Activated naive CD4-positive, alpha-beta T cell treated with anti-CD3 and anti-CD28 coated beads for 36 hours (primary cell): ENCODE measurements at regions of chr13 and their contacts with region 1.

Region 1: GRCh38 chr13:44293908-44294735 is 79.5 kb upstream of the SERP2 start:
- DNase-seq: peak; percentile 27
- H3K4me3 Mint-ChIP-seq: no peak overlapping the region
- H3K27ac Mint-ChIP-seq: peak overlapping the region; percentile 59
- H3K4me1 Mint-ChIP-seq: peaks cover 27% of the 10 kb centered on the region
- H3K27me3 Mint-ChIP-seq: peaks cover 18% of the 10 kb centered on the region

Region 2: GRCh38 chr13:44274452-44275205 is 19.5 kb before region 1 on chr13:
- CTCF ChIA-PET with region 1: no interaction called
- intact Hi-C with region 1: loop called (anchors 1 kb)
- DNase-seq: peak; percentile 27
- H3K4me3 Mint-ChIP-seq: peak overlapping the region; percentile 70
- H3K27ac Mint-ChIP-seq: peak overlapping the region; percentile 89
- H3K4me1 Mint-ChIP-seq: peaks cover 65% of the 10 kb centered on the region
- H3K27me3 Mint-ChIP-seq: no peaks in the 10 kb centered on the region

Region 3: DNA sequence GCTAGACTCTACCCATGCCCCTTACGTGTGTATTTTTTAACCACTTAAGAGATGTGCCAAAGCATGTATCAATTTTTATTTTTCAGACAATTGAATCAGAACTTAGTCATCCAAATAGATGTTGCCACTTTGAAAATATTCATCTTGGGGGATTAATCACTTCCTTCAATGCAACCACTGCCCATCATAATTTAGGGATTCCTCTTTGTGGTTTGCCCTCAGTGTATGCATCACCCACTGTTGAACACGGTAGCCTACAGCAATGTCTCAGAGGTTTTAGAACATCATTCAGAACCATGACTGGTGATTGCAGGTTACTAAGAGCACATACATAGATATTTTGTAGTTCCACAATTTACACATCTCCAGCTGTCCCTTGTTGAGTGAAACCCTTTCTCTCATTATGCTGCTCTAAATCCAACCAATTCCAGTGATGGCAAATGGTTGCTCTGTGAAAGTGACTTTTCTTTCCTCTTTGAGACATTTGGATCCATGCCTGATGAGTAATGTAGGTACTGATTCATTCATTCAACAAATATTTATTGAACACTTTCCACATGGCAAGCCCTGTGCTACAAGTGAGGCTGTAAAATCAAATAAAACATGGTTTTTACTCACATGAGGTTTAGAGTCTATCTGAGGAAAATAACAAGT is 18.9 kb after region 1 on chr13:
- CTCF ChIA-PET with region 1: no interaction called
- intact Hi-C with region 1: loop called (anchors 1 kb)
- DNase-seq: peak; percentile 43
- H3K4me3 Mint-ChIP-seq: no peak overlapping the region
- H3K27ac Mint-ChIP-seq: peak overlapping the region; percentile 42
- H3K4me1 Mint-ChIP-seq: peaks cover 14% of the 10 kb centered on the region
- H3K27me3 Mint-ChIP-seq: peaks cover 21% of the 10 kb centered on the region

Region 4: DNA sequence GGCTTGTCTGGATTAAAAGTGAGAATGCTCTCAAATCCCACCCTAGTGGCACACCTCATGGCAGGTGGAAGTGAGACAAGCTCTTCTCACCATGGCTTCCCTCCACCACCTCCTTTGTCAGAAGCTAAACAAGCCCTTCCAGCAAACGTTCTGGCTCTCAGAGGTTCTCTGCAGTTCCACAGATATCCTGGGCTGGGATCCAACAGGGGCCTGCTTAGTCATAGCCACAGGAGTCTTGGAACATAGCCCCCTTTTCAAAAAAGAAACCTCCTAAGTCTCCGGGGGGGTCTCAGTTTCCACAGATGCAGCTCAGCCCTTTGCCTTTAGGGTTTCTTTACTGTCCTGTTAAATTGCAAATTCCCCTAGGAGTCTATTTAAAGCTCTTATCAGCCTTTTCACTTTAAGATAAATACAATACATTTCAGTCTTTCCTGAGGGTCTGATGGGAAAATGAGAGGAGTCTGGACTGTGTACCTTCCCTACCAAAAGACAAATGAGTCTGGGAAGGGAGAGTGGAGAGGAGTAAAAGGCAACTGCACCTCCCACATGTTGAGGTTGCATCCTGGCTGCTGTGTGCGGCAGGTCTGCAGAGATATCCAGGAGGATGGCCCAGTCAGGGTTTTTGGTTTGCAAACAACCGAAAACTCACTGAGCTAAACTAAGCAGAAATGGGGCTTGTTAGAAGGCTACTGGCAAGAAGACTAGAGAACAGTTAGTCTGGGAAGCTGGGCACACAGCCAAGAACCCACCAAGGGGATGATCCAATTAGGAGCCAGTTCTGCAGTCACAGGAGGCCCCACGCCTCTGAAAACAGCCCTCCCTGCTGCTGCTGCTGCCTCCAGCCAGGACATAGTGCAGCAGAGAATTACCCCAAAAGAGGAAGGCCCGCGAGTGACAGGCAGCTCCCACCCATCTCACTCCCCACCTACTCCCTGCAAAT is 38.1 kb after region 1 on chr13:
- CTCF ChIA-PET with region 1: no interaction called
- intact Hi-C with region 1: loop called (anchors 2 kb)
- DNase-seq: no peak
- H3K4me3 Mint-ChIP-seq: no peak overlapping the region
- H3K27ac Mint-ChIP-seq: peak overlapping the region; percentile 59
- H3K4me1 Mint-ChIP-seq: peaks cover 13% of the 10 kb centered on the region
- H3K27me3 Mint-ChIP-seq: peaks cover 5% of the 10 kb centered on the region

Region 5: GRCh38 chr13:44565881-44566280 is 271.8 kb after region 1 on chr13:
- CTCF ChIA-PET with region 1: no interaction called
- intact Hi-C with region 1: no loop called
- DNase-seq: no peak
- H3K4me3 Mint-ChIP-seq: no peak overlapping the region
- H3K27ac Mint-ChIP-seq: no peak overlapping the region
- H3K4me1 Mint-ChIP-seq: peaks cover 27% of the 10 kb centered on the region
- H3K27me3 Mint-ChIP-seq: no peaks in the 10 kb centered on the region